HCT116 (cell line): ENCODE measurements at regions of chr1 and their contacts with region 1.

Region 1: GRCh38 chr1:201170533-201171062 is 16.3 kb upstream of the TMEM9 start:
- DNase-seq: peak; percentile 92
- ATAC-seq: peak; percentile 98
- H3K4me3 ChIP-seq: peak overlapping the region; percentile 61 to 68
- H3K27ac ChIP-seq: peak overlapping the region; percentile 86
- H3K4me1 ChIP-seq: peaks cover 9 to 16% of the 10 kb centered on the region in 2 experiments
- H3K27me3 ChIP-seq: no peaks in the 10 kb centered on the region
- CTCF ChIP-seq: no peak
- POLR2A ChIP-seq: peak; percentile 80
- RAD21 ChIP-seq: no peak

Region 2: GRCh38 chr1:201126832-201127754 is 43.5 kb before region 1 on chr1 and contains the start of gene ASCL5:
- CTCF ChIA-PET with region 1: no interaction called
- POLR2A ChIA-PET with region 1: no interaction called
- RAD21 ChIA-PET with region 1: no interaction called
- intact Hi-C with region 1: loop called (anchors 2 kb)
- DNase-seq: peak; percentile 72
- ATAC-seq: peak; percentile 88
- H3K4me3 ChIP-seq: peak within 1 kb of the TSS; percentile 28 to 55
- H3K27ac ChIP-seq: peak within 1 kb of the TSS; percentile 42; the same call in 1 of the 2 replicates
- H3K4me1 ChIP-seq: peaks cover 13 to 30% of the 10 kb centered on the region in 2 experiments
- H3K27me3 ChIP-seq: peaks cover 17% of the 10 kb centered on the region; the same call in 1 of the 2 replicates
- CTCF ChIP-seq: peak in 2 of 3 experiments; percentile 39 to 46; a peak in 4 of 6 replicates
- POLR2A ChIP-seq: no peak
- RAD21 ChIP-seq: peak; percentile 41
- total RNA-seq, gene ASCL5: 0.15 TPM